CD8-positive, alpha-beta T cell (primary cell): ENCODE measurements at regions of chr3 and their contacts with region 1.

Region 1: GRCh38 chr3:71031914-71032521 is 551.5 kb downstream of the FOXP1 start:
- DNase-seq: peak in 4 of 9 experiments; percentile 21 to 64 (median 40)
- ATAC-seq: peak; percentile 85
- H3K4me3 ChIP-seq: no peak overlapping the region
- H3K4me3 Mint-ChIP-seq: no peak overlapping the region
- H3K27ac ChIP-seq: no peak overlapping the region
- H3K27ac Mint-ChIP-seq: peak overlapping the region; percentile 89
- H3K4me1 ChIP-seq: peaks cover 51% of the 10 kb centered on the region
- H3K4me1 Mint-ChIP-seq: peaks cover 86% of the 10 kb centered on the region
- H3K27me3 ChIP-seq: no peaks in the 10 kb centered on the region
- H3K27me3 Mint-ChIP-seq: no peaks in the 10 kb centered on the region
- CTCF ChIP-seq: no peak

Region 2: GRCh38 chr3:71050538-71051258 is 18.7 kb after region 1 on chr3:
- CTCF ChIA-PET with region 1: no interaction called
- POLR2A ChIA-PET with region 1: interaction called, 4 read pairs
- intact Hi-C with region 1: loop called in 1 of 2 experiments (anchors 2 kb)
- DNase-seq: peak in 6 of 9 experiments; percentile 14 to 85 (median 48)
- ATAC-seq: peak; percentile 93
- H3K4me3 ChIP-seq: no peak overlapping the region
- H3K4me3 Mint-ChIP-seq: peak overlapping the region; percentile 46
- H3K27ac ChIP-seq: peak overlapping the region; percentile 10 to 49
- H3K27ac Mint-ChIP-seq: peak overlapping the region; percentile 97
- H3K4me1 ChIP-seq: peaks cover 96% of the 10 kb centered on the region
- H3K4me1 Mint-ChIP-seq: peaks cover 100% of the 10 kb centered on the region
- H3K27me3 ChIP-seq: no peaks in the 10 kb centered on the region
- H3K27me3 Mint-ChIP-seq: no peaks in the 10 kb centered on the region
- CTCF ChIP-seq: no peak

Region 3: DNA sequence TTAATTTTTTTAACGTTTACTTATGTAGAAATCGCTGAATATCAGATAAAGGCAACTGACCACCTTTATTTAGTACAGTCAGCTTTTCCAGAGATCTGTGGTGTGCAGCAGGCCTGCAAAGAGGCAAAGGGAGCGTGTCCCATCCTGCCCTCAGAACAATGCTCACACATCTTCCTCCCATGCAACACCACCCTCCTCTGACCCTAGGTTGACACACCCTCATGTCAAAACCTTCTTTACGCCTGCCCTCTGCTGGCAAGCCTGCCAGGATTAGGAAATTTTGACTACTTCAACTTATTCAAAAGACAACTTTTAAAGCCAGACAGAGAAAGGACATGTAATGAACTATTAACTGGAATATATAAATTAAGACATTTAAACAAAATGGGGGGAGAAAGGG is 37.8 kb after region 1 on chr3:
- CTCF ChIA-PET with region 1: interaction called, 3 read pairs
- POLR2A ChIA-PET with region 1: no interaction called
- intact Hi-C with region 1: loop called (anchors 5 kb)
- DNase-seq: peak; percentile 57 to 81 (median 72)
- ATAC-seq: peak; percentile 29
- H3K4me3 ChIP-seq: no peak overlapping the region
- H3K4me3 Mint-ChIP-seq: no peak overlapping the region
- H3K27ac ChIP-seq: no peak overlapping the region
- H3K27ac Mint-ChIP-seq: peak overlapping the region; percentile 91
- H3K4me1 ChIP-seq: peaks cover 89% of the 10 kb centered on the region
- H3K4me1 Mint-ChIP-seq: peaks cover 84% of the 10 kb centered on the region
- H3K27me3 ChIP-seq: no peaks in the 10 kb centered on the region
- H3K27me3 Mint-ChIP-seq: no peaks in the 10 kb centered on the region
- CTCF ChIP-seq: peak; percentile 67